ENCODE measurements at regions of chr3 and their contacts with region 1.

Region 1: DNA sequence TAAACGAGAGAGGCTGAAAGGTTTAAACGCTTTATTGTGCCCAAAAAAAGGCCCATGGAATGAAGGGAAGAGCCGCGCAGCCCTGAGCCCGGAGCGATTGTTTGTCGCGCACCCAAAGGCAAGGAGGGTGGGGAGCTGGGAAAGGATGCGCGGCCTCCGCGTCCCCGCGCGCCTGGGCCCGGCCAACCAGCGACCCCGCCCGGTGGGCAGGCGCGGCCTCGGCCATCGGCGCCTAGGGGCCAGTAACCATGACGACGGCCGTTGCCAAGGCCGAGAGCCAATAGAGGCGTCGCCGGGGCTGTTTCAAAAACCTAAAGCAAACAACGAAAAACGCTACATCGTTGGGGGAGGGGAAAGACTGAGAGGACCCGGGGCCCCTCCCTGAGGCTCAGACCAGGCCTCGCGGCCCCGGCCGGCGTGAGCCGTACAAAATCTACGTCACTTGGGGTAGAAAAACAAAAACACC is 36.1 kb downstream of the HMCES start:
- DNase-seq: peak; percentile 95

Region 2: GRCh38 chr3:128863560-128863959 is 451.2 kb before region 1 on chr3:
- intact Hi-C with region 1: no loop called
- DNase-seq: no peak

Region 3: GRCh38 chr3:129278439-129278970 is 36.3 kb before region 1 on chr3 and contains the start of gene HMCES:
- intact Hi-C with region 1: loop called in 1 of 2 experiments (anchors 2 kb)
- DNase-seq: peak; percentile 98
- total RNA-seq, gene HMCES: 24.5 to 25.2 TPM

Region 4: GRCh38 chr3:129352045-129352444 is 37.3 kb after region 1 on chr3:
- intact Hi-C with region 1: no loop called
- DNase-seq: no peak

Measured in posterior vena cava (tissue), 2 donors.